MCF 10A (cell line): ENCODE measurements at regions of chr6 and their contacts with region 1.

Region 1: DNA sequence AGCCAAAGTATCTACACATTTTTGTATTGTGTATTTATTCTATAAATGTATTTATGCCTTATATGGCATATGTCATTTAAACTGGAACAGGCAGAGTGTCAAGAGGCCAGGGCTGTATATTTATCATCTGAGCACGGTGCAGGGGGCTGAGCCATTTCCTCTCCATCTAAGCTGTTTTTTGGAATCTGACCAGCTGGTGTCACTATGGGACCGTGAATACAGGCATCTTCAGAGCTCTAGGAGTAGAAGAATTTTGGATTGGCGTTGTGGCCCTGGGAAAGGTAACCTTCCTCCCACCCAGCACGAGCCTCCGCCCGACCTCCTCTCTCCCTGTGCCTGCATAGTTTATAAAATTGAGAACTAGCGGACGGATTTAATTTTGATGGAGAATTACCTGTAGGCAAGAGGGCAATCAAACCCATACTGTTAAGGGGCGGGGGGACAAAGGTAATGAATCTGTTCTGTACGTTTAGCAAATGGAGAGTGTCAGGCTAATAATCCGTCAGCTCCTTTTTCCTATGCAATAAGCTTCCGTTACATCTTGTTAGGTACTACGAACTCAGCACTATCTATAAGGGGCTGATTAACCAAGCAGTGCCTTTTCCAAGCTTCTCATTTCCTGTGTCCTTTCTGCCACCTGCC is 29.0 kb upstream of the EEF1E1 start:
- DNase-seq: peak; percentile 82
- H3K4me3 Mint-ChIP-seq: no peak overlapping the region
- H3K27ac Mint-ChIP-seq: no peak overlapping the region
- H3K4me1 Mint-ChIP-seq: peaks cover 20% of the 10 kb centered on the region
- H3K27me3 Mint-ChIP-seq: no peaks in the 10 kb centered on the region
- CTCF ChIP-seq: peak; percentile 80

Region 2: DNA sequence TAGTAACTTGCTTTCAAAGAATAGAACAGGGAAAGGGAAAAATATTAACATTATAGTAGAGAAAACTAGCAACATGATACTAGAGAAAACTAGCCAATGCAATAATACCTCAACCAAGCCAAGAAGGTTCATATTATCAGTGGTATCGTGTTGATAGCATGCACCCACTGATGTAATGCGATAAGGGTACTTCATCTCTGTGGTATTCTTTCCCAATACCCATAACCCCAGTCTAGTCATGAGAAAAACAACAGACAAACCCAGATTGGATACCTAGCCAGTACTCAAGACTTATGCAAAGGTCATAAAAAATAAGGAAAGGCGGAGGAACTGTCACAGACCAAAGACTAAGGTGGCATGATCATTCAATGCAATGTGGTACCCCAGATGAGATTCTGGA is 88.2 kb before region 1 on chr6:
- CTCF ChIA-PET with region 1: no interaction called
- POLR2A ChIA-PET with region 1: no interaction called
- intact Hi-C with region 1: no loop called
- DNase-seq: no peak
- H3K4me3 Mint-ChIP-seq: no peak overlapping the region
- H3K27ac Mint-ChIP-seq: no peak overlapping the region
- H3K4me1 Mint-ChIP-seq: peaks cover 8% of the 10 kb centered on the region
- H3K27me3 Mint-ChIP-seq: no peaks in the 10 kb centered on the region
- CTCF ChIP-seq: no peak

Region 3: DNA sequence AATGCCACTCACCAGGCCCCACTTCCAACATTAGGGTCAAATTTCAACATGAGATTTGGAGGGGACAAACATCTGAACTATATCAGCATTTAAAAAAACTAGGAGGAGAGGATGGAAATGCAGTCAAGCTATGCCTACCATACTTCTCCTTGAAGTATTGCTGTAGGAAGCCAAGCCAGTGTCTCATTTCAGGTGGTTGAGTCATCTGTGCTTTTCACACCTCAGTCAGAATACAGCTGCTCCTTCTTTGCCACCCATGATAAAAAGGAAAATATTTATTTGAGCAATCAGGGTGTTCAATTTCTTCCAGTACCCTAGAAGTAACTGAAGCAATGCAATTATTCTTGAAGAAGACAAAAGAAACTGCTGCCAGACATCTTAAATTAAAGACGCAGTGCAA is 18.0 kb after region 1 on chr6:
- CTCF ChIA-PET with region 1: interaction called, 23 read pairs
- POLR2A ChIA-PET with region 1: interaction called, 3 read pairs
- intact Hi-C with region 1: no loop called
- DNase-seq: peak; percentile 8
- H3K4me3 Mint-ChIP-seq: no peak overlapping the region
- H3K27ac Mint-ChIP-seq: no peak overlapping the region
- H3K4me1 Mint-ChIP-seq: no peaks in the 10 kb centered on the region
- H3K27me3 Mint-ChIP-seq: no peaks in the 10 kb centered on the region
- CTCF ChIP-seq: no peak

Region 4: GRCh38 chr6:8212720-8213434 is 81.5 kb after region 1 on chr6:
- CTCF ChIA-PET with region 1: interaction called, 321 read pairs
- POLR2A ChIA-PET with region 1: interaction called, 3 read pairs
- intact Hi-C with region 1: no loop called
- DNase-seq: no peak
- H3K4me3 Mint-ChIP-seq: no peak overlapping the region
- H3K27ac Mint-ChIP-seq: no peak overlapping the region
- H3K4me1 Mint-ChIP-seq: no peaks in the 10 kb centered on the region
- H3K27me3 Mint-ChIP-seq: no peaks in the 10 kb centered on the region
- CTCF ChIP-seq: no peak

Region 5: DNA sequence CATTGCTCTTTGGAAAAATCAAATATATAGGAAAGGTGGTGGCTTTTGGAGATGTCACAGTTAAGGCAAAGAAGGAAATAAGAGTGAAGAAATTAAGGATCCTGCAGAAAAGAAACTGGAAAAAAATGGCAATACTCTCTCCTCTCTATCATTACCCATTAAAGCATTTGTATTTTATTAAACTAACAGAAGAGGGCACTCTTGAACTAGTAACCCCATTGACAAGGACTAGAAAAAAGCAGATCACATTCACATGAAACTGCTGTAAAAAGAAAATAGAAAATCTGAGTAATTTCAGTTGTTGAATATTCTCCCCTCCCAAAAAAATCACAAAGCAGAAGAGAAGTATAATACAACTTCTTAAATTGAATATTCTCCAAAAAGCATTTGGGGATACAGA is 408.1 kb after region 1 on chr6:
- CTCF ChIA-PET with region 1: no interaction called
- POLR2A ChIA-PET with region 1: no interaction called
- intact Hi-C with region 1: loop called (anchors 10 kb)
- DNase-seq: peak; percentile 55
- H3K4me3 Mint-ChIP-seq: no peak overlapping the region
- H3K27ac Mint-ChIP-seq: peak overlapping the region; percentile 13
- H3K4me1 Mint-ChIP-seq: peaks cover 9% of the 10 kb centered on the region
- H3K27me3 Mint-ChIP-seq: no peaks in the 10 kb centered on the region
- CTCF ChIP-seq: peak; percentile 54